Activated B cell treated with CpG ODN at 0.5 μM for 24 hours (primary cell): ENCODE measurements at regions of chr9 and their contacts with region 1.

Region 1: GRCh38 chr9:36632892-36633291 is 60.2 kb downstream of the MELK start:
- DNase-seq: no peak
- ATAC-seq: no peak
- H3K4me3 Mint-ChIP-seq: no peak overlapping the region
- H3K27ac Mint-ChIP-seq: no peak overlapping the region
- H3K4me1 Mint-ChIP-seq: no peaks in the 10 kb centered on the region
- H3K27me3 Mint-ChIP-seq: no peaks in the 10 kb centered on the region
- CTCF ChIP-seq: peak; percentile 24

Region 2: GRCh38 chr9:36728651-36729520 is 96.0 kb after region 1 on chr9:
- CTCF ChIA-PET with region 1: interaction called, 49 read pairs
- POLR2A ChIA-PET with region 1: interaction called, 5 read pairs
- intact Hi-C with region 1: loop called (anchors 1 kb)
- DNase-seq: peak; percentile 55
- ATAC-seq: peak; percentile 70
- H3K4me3 Mint-ChIP-seq: no peak overlapping the region
- H3K27ac Mint-ChIP-seq: peak overlapping the region; percentile 27
- H3K4me1 Mint-ChIP-seq: peaks cover 14% of the 10 kb centered on the region
- H3K27me3 Mint-ChIP-seq: no peaks in the 10 kb centered on the region
- CTCF ChIP-seq: peak; percentile 93

Region 3: DNA sequence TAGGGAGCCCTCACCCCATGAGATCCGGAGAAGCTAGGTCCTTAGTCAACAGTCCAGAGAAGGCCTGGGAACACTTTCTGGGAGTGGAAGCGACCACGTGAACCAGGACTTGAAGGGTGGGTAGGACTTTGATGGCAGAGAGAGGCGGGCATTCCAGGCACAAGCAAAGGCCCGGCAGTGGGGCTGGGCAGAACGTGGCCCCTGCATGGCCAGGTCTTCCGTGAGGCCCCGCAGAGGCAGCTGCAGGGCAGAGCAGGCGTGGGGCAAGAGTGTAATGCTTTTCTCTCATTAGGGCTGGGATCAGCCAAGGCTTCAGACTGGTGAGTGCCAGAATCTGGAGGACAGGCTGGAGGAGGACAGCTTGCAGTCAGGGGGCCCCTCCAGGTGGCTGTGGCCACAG is 217.1 kb after region 1 on chr9:
- CTCF ChIA-PET with region 1: interaction called, 4 read pairs
- POLR2A ChIA-PET with region 1: no interaction called
- intact Hi-C with region 1: loop called (anchors 5 kb)
- DNase-seq: no peak
- ATAC-seq: no peak
- H3K4me3 Mint-ChIP-seq: no peak overlapping the region
- H3K27ac Mint-ChIP-seq: no peak overlapping the region
- H3K4me1 Mint-ChIP-seq: peaks cover 4% of the 10 kb centered on the region
- H3K27me3 Mint-ChIP-seq: no peaks in the 10 kb centered on the region
- CTCF ChIP-seq: no peak

Region 4: DNA sequence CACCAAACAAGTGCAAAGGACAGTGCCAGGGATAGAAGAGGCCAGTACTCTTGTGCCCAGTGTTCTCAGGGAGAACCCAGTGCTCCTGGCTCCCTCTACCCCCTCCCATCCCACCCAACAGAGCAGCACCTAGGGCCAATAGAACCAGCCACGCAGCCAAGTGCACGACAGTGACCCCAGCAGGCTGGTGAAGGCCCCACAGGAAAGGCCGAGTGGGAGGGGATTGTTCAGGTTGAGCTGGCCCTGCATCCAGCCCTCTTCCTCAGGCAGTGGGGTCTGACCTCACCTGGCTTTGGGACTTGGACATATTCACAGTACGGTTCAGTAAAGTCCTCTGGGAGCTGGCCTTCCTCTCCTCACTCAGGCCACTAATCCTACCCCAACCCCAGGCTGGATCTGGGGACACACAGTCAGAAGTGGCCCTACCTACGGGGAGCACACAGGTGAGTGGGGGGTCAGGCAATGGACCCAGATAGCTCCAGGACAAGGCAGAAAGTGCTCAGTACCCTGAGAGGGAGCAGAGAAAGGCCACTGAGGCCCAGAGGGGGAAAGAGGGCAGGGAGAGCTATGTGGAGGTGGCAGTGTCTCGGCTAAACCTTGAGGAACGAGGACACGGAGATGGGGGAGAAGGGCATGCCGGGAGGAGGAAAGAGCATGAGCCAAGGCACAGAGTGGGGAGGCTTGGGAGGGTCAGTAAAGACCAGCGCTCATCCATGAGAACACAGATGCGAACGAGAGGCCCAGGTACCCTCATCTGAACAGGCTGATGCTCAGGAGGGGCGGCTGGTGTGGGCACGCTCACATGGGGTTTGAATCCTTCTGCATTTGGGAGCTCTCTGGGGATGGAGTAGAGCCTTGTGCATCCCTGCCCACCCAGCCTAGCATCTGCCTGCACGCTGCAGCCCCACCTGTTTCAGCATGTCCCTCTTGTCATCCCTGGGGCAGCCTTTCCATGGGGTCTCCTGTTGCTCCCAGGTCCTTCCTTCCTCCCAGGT is 878.4 kb after region 1 on chr9:
- CTCF ChIA-PET with region 1: no interaction called
- POLR2A ChIA-PET with region 1: no interaction called
- intact Hi-C with region 1: loop called (anchors 2 kb)
- DNase-seq: no peak
- ATAC-seq: peak; percentile 78
- H3K4me3 Mint-ChIP-seq: no peak overlapping the region
- H3K27ac Mint-ChIP-seq: no peak overlapping the region
- H3K4me1 Mint-ChIP-seq: peaks cover 8% of the 10 kb centered on the region
- H3K27me3 Mint-ChIP-seq: no peaks in the 10 kb centered on the region
- CTCF ChIP-seq: no peak